ENCODE measurements at regions of chrX and their contacts with region 1.

Region 1: DNA sequence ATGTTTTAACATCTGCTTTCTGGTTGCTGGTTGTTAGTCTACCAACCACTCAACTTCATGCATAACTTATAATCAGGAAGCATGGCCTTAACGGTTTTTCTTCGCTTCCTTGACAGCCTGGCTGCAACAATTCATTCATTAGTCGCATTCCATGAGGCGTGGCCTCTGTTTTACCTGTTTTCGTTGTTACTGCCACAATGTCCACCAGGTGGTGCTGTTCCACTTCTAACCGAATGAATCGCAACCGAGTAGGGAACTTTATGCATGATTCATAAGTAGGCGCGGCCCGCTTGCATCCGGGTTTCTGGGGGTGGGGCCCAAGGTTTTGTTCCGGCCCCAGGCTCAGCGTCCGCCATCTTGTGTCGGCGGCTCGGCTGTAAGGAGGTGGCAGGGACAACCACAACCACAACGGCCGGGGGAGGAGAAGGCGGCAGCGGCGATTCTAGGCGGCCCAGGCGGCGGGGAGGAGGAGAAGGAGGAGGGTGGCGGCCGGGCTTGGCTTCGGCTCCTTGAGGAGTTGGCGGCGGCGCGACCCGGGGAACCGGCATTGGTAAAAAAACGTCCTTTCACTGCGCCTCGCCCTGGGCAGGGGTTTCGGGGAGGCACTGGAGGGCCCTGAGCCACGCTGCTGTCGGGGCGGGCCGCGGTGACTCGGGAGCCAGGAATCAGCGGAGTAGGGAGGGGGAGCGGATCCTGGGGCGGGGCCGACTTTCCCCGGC is at the start of gene UBA1:
- DNase-seq: peak; percentile 72
- ATAC-seq: peak; percentile 71
- H3K4me3 Mint-ChIP-seq: peak within 1 kb of the TSS; percentile 95
- H3K27ac Mint-ChIP-seq: peak within 1 kb of the TSS; percentile 96
- H3K4me1 Mint-ChIP-seq: peaks cover 58% of the 10 kb centered on the region
- H3K27me3 Mint-ChIP-seq: no peaks in the 10 kb centered on the region
- CTCF ChIP-seq: no peak
- total RNA-seq, gene UBA1: 229 and 235 TPM in 2 replicates

Region 2: GRCh38 chrX:47144626-47145394 is 48.8 kb before region 1 on chrX and contains the starts of genes NDUFB11 and RBM10:
- CTCF ChIA-PET with region 1: interaction called, 3 read pairs
- POLR2A ChIA-PET with region 1: interaction called, 34 read pairs
- intact Hi-C with region 1: loop called (anchors 1 kb)
- DNase-seq: peak; percentile 73
- ATAC-seq: peak; percentile 90
- H3K4me3 Mint-ChIP-seq: peak within 1 kb of the TSS; percentile 96
- H3K27ac Mint-ChIP-seq: peak within 1 kb of the TSS; percentile 97
- H3K4me1 Mint-ChIP-seq: peaks cover 30% of the 10 kb centered on the region
- H3K27me3 Mint-ChIP-seq: no peaks in the 10 kb centered on the region
- CTCF ChIP-seq: no peak
- total RNA-seq, gene NDUFB11: 73.3 and 88.0 TPM in 2 replicates
- total RNA-seq, gene RBM10: 54.9 and 55.6 TPM in 2 replicates

Region 3: DNA sequence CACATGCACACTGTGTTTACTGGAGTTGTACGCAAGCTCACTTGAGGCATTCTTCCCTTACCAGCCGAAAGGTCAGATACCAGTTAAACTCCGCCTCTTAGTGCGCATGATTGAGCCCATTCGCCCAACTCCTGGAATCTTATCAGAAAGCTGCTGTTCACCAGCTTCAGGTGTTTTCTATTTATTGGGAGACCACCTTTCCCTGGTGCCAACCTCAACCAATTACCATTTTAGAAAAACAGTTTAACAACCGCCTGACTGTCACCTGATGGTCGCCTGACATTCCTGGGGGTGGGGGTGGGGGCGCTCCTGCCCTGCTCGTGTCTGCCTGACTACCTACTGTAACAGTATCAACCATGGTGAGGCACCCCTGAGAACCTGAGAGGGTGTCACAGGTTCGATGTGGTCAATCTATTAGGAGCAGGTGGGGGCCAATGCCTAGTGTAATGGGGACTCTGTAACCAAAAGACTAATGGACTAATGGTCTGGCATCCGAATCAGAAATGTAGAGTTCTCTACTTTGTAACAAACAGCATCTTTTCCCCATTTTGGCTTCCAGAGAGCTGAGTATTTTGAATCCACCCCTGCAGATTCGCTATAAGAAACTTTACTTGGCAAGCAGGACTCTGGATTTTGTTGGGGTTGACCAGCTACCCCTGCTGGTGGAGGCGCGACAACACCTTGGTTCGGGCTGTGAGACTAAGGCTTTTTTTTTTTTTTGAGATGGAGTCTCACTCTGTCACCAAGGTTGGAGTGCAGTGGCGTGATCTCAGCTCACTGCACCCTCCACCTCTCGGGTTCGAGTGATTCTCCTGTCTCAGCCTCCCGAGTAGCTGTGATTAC is 118.5 kb after region 1 on chrX:
- CTCF ChIA-PET with region 1: no interaction called
- POLR2A ChIA-PET with region 1: no interaction called
- intact Hi-C with region 1: loop called (anchors 1 kb)
- DNase-seq: no peak
- ATAC-seq: peak; percentile 28
- H3K4me3 Mint-ChIP-seq: no peak overlapping the region
- H3K27ac Mint-ChIP-seq: no peak overlapping the region
- H3K4me1 Mint-ChIP-seq: no peaks in the 10 kb centered on the region
- H3K27me3 Mint-ChIP-seq: no peaks in the 10 kb centered on the region
- CTCF ChIP-seq: no peak

Region 4: GRCh38 chrX:47482512-47483309 is 289.1 kb after region 1 on chrX and contains the start of gene ZNF41:
- CTCF ChIA-PET with region 1: no interaction called
- POLR2A ChIA-PET with region 1: interaction called, 4 read pairs
- intact Hi-C with region 1: loop called (anchors 2 kb)
- DNase-seq: peak; percentile 63
- ATAC-seq: peak; percentile 78
- H3K4me3 Mint-ChIP-seq: peak within 1 kb of the TSS; percentile 90
- H3K27ac Mint-ChIP-seq: peak within 1 kb of the TSS; percentile 92
- H3K4me1 Mint-ChIP-seq: peaks cover 42% of the 10 kb centered on the region
- H3K27me3 Mint-ChIP-seq: no peaks in the 10 kb centered on the region
- CTCF ChIP-seq: no peak
- total RNA-seq, gene ZNF41: 15.4 and 19.2 TPM in 2 replicates

Region 5: DNA sequence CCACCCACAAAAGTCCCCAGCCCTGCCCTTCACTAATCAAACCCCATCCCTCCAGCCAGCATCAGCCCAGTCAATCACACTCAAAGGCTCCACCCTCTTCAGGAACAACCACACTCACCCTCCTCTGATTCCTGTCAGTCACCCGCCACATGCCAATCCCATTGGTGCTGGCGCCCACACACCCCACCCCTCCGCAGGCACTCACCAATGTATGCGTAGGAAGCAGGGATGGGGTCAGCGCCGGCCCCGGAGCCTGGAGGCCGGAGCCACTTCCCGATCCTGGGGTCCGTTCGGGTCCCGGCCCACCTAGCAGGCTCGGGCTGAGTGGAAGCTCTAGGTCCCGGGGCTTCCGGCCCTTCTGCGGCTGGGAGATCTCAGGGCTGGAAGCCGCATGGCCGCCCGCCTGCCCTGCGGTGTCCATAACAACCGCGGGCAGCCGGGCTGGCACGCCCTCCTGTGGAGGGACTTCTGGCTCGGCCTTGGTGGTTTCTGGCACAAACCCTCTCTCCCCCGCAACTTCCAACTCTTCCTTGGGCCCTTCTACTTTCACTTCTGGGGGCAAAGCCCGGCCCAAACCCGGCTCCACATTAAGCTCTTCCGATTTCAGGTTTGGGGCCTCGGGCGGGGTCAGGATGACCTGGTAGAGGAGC is 444.0 kb after region 1 on chrX:
- CTCF ChIA-PET with region 1: no interaction called
- POLR2A ChIA-PET with region 1: no interaction called
- intact Hi-C with region 1: loop called (anchors 5 kb)
- DNase-seq: no peak
- ATAC-seq: peak; percentile 96
- H3K4me3 Mint-ChIP-seq: peak overlapping the region; percentile 63
- H3K27ac Mint-ChIP-seq: peak overlapping the region; percentile 79
- H3K4me1 Mint-ChIP-seq: peaks cover 12% of the 10 kb centered on the region
- H3K27me3 Mint-ChIP-seq: no peaks in the 10 kb centered on the region
- CTCF ChIP-seq: no peak

Region 6: DNA sequence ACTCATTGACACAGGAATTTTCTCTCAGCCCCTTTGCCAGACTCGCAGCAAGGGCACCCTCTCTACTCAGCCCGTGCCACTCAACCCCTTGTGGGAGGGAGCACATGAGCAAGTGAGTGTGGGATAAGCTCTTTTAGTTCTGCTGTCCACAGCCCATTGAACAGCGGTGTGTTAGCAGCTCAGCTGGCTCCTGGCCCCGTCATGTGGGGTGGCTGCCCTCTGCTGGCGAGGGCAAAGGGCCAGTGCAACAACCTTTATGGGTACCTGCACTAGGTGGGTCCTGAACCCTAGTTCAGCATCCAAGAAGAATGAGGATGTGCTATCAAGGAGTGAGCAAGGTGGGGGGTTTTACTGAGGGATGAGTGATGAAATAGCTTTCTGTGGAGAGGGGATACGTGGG is 558.0 kb after region 1 on chrX:
- CTCF ChIA-PET with region 1: no interaction called
- POLR2A ChIA-PET with region 1: no interaction called
- intact Hi-C with region 1: loop called (anchors 5 kb)
- DNase-seq: no peak
- ATAC-seq: no peak
- H3K4me3 Mint-ChIP-seq: no peak overlapping the region
- H3K27ac Mint-ChIP-seq: no peak overlapping the region
- H3K4me1 Mint-ChIP-seq: no peaks in the 10 kb centered on the region
- H3K27me3 Mint-ChIP-seq: peaks cover 14% of the 10 kb centered on the region
- CTCF ChIP-seq: no peak

Measured in activated B cell treated with CpG ODN at 0.5 μM for 24 hours (primary cell).